ENCODE measurements at regions of chr3 and their contacts with region 1.

Region 1: DNA sequence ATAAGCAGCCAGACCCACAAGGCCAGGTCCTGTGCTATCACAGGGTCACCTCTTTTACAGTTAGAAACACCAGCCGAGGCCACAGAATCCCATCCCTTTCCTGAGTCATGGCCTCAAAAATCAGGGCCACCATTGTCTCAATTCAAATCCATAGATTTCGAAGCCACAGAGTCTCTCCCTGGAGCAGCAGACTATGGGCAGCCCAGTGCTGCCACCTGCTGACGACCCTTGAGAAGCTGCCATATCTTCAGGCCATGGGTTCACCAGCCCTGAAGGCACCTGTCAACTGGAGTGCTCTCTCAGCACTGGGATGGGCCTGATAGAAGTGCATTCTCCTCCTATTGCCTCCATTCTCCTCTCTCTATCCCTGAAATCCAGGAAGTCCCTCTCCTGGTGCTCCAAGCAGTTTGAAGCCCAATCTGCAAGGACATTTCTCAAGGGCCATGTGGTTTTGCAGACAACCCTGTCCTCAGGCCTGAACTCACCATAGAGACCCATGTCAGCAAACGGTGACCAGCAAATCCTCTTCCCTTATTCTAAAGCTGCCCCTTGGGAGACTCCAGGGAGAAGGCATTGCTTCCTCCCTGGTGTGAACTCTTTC is 39.6 kb downstream of the TGM4 start:
- DNase-seq: peak; percentile 68
- H3K4me3 ChIP-seq: no peak overlapping the region
- H3K27ac ChIP-seq: no peak overlapping the region
- H3K4me1 ChIP-seq: no peaks in the 10 kb centered on the region
- H3K27me3 ChIP-seq: no peaks in the 10 kb centered on the region
- CTCF ChIP-seq: peak; percentile 84 to 91

Region 2: GRCh38 chr3:44323341-44323955 is 590.5 kb before region 1 on chr3:
- CTCF ChIA-PET with region 1: no interaction called
- dilution Hi-C with region 1: no loop called
- in situ Hi-C with region 1: no loop called
- intact Hi-C with region 1: loop called (anchors 1 kb)
- DNase-seq: peak; percentile 42
- H3K4me3 ChIP-seq: no peak overlapping the region
- H3K27ac ChIP-seq: no peak overlapping the region
- H3K4me1 ChIP-seq: no peaks in the 10 kb centered on the region
- H3K27me3 ChIP-seq: no peaks in the 10 kb centered on the region
- CTCF ChIP-seq: peak; percentile 88 to 91

Region 3: GRCh38 chr3:44529927-44530326 is 384.0 kb before region 1 on chr3:
- CTCF ChIA-PET with region 1: no interaction called
- dilution Hi-C with region 1: no loop called
- in situ Hi-C with region 1: loop called in 1 of 2 experiments (anchors 10 kb)
- intact Hi-C with region 1: loop called (anchors 1 kb)
- DNase-seq: no peak
- H3K4me3 ChIP-seq: no peak overlapping the region
- H3K27ac ChIP-seq: no peak overlapping the region
- H3K4me1 ChIP-seq: no peaks in the 10 kb centered on the region
- H3K27me3 ChIP-seq: no peaks in the 10 kb centered on the region
- CTCF ChIP-seq: peak; percentile 33 to 36

Region 4: DNA sequence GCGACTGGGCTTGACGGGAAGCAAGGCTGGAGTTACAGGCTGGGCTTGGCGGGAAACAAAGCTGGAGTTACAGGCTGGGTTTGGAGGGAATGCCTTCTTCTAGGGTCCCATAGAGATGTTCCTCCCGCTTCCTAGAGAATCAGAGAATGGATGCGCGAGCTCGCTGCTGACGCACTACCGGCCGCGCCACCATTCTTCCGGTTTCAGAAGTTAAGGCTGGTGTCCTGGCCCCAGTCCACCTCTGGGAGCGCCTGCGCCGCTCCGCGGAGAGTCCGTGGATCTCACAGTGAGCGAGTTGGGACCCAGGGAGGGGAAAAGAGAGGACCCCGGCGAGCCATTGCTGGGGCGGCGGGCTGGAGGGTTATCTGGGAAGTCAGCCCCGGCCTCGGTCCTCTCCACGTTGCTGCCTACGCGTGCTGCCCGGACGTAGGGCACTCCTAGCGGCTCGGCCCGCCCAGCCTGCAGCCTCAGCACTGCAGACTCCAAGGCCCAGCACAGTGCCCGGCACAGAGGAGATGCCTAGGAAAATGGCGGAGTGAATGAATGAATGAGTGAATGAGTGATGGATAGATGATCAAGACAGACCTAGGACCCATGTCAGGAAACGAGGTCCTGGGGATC is 201.4 kb before region 1 on chr3 and contains the start of gene ZNF502:
- CTCF ChIA-PET with region 1: no interaction called
- dilution Hi-C with region 1: no loop called
- in situ Hi-C with region 1: no loop called
- intact Hi-C with region 1: loop called (anchors 1 kb)
- DNase-seq: peak; percentile 80
- H3K4me3 ChIP-seq: peak within 1 kb of the TSS; percentile 72 to 88 (median 81)
- H3K27ac ChIP-seq: peak within 1 kb of the TSS; percentile 4
- H3K4me1 ChIP-seq: no peaks in the 10 kb centered on the region
- H3K27me3 ChIP-seq: no peaks in the 10 kb centered on the region
- CTCF ChIP-seq: peak; percentile 19 to 50
- total RNA-seq, gene ZNF502: 6.0 to 6.1 TPM

Region 5: GRCh38 chr3:44845528-44846520 is 68.1 kb before region 1 on chr3:
- CTCF ChIA-PET with region 1: no interaction called
- dilution Hi-C with region 1: no loop called
- in situ Hi-C with region 1: no loop called
- intact Hi-C with region 1: loop called (anchors 5 kb)
- DNase-seq: peak; percentile 46
- H3K4me3 ChIP-seq: no peak overlapping the region
- H3K27ac ChIP-seq: no peak overlapping the region
- H3K4me1 ChIP-seq: no peaks in the 10 kb centered on the region
- H3K27me3 ChIP-seq: no peaks in the 10 kb centered on the region
- CTCF ChIP-seq: no peak

Region 6: DNA sequence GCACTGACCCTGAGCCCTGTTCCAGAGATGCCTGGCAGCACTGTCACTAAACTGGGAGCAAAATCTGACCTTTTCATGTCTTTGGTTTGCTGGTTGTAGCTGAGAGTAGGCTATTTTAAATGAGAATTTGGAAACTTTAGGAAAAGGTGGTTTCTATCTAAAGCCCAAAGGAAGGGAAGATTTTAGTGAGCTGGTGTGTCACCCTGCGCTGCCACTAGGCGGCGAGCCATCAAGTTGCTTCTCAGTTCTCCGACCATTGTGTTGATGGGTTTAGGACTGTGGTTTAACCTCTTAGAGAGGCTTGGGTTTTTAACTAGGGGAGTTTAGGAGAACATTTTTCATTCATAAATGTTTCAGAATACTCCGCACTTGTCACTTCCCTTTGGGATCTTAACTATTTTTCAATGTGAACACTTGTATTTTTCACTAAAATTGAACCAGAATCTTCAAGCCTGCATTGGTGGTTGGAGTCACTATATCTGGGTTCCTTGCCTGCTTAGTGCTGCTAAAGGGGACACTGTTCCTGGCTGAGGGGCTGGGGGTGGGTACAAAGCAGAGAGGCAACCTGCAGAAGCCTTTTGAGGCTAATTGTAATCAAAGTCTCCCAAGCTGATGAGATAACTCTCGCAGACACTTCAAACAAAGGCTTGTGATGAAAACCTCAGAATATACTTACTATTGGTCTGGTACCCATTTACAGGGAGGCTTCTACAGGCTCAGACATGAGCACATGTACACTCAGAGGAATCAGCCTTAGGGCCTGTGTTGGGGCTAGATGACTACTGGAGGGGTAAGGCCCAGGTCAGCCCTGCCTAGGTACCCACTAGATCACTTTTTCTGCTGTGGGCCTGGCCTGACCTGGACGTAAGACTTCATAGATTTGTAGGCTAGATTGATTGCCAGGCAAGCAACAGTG is 78.8 kb after region 1 on chr3:
- CTCF ChIA-PET with region 1: no interaction called
- dilution Hi-C with region 1: no loop called
- in situ Hi-C with region 1: no loop called
- intact Hi-C with region 1: loop called (anchors 5 kb)
- DNase-seq: peak; percentile 96
- H3K4me3 ChIP-seq: no peak overlapping the region
- H3K27ac ChIP-seq: peak overlapping the region; percentile 92
- H3K4me1 ChIP-seq: peaks cover 54% of the 10 kb centered on the region
- H3K27me3 ChIP-seq: no peaks in the 10 kb centered on the region
- CTCF ChIP-seq: peak; percentile 79 to 93

Region 7: GRCh38 chr3:45026038-45026437 is 112.1 kb after region 1 on chr3 and contains the start of gene CLEC3B:
- CTCF ChIA-PET with region 1: no interaction called
- dilution Hi-C with region 1: no loop called
- in situ Hi-C with region 1: no loop called
- intact Hi-C with region 1: loop called (anchors 5 kb)
- DNase-seq: no peak
- H3K4me3 ChIP-seq: no peak within 1 kb of the TSS
- H3K27ac ChIP-seq: no peak within 1 kb of the TSS
- H3K4me1 ChIP-seq: peaks cover 15% of the 10 kb centered on the region
- H3K27me3 ChIP-seq: no peaks in the 10 kb centered on the region
- CTCF ChIP-seq: no peak
- total RNA-seq, gene CLEC3B: 0.33 TPM in 1 of 2 donors, not detected in the other

Region 8: GRCh38 chr3:45055411-45056143 is 141.6 kb after region 1 on chr3:
- CTCF ChIA-PET with region 1: no interaction called
- dilution Hi-C with region 1: no loop called
- in situ Hi-C with region 1: no loop called
- intact Hi-C with region 1: no loop called
- DNase-seq: no peak
- H3K4me3 ChIP-seq: no peak overlapping the region
- H3K27ac ChIP-seq: peak overlapping the region; percentile 15
- H3K4me1 ChIP-seq: peaks cover 29% of the 10 kb centered on the region
- H3K27me3 ChIP-seq: no peaks in the 10 kb centered on the region
- CTCF ChIP-seq: peak; percentile 14 to 31

Region 9: DNA sequence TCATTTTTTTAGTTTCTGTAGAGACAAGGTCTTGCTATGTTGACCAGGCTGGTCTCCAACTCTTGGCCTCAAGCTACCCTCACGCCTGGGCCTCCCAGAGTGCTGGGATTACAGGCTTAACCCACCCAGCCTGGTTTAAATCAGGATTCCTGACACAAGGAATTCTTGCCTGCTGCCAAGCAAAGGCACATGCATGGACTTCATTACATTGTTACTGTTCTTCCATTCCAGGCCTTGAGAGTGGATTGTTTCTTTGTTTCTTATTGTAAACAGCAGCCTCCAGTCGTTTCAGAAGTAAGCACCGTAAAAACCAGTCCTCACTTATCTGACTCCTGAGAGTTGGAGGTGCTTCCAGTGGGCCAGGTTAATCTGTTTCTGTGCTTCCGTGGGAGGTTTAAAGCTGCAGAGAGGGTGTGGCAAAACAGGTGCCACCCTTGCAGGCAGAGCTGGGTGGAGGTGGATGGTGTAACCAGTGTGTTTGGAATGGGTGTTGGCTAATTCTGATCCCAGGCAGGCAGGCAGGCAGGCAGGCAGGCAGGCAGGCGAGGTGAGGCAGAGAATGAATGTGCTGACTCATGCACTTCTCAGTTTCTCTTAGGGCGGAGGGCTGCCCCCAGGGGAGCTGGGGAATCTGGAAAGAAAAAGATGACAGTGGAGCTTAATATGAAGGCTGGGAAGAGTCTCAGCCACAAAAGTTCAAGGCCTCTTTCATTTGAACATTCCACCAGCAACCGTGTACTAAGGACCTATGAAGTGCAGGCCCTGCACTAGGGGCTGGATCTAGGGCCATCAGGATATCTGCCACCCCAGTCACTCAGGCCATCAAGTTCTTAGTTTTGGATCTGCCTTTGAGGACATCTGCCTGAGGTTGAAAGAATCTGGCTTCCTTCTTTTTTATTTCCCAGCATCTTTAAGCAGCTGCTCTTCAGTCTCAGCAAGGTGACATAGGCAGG is 269.2 kb after region 1 on chr3:
- CTCF ChIA-PET with region 1: no interaction called
- dilution Hi-C with region 1: no loop called
- in situ Hi-C with region 1: no loop called
- intact Hi-C with region 1: no loop called
- DNase-seq: peak; percentile 95
- H3K4me3 ChIP-seq: no peak overlapping the region
- H3K27ac ChIP-seq: peak overlapping the region; percentile 61
- H3K4me1 ChIP-seq: peaks cover 40% of the 10 kb centered on the region
- H3K27me3 ChIP-seq: no peaks in the 10 kb centered on the region
- CTCF ChIP-seq: no peak

Region 10: DNA sequence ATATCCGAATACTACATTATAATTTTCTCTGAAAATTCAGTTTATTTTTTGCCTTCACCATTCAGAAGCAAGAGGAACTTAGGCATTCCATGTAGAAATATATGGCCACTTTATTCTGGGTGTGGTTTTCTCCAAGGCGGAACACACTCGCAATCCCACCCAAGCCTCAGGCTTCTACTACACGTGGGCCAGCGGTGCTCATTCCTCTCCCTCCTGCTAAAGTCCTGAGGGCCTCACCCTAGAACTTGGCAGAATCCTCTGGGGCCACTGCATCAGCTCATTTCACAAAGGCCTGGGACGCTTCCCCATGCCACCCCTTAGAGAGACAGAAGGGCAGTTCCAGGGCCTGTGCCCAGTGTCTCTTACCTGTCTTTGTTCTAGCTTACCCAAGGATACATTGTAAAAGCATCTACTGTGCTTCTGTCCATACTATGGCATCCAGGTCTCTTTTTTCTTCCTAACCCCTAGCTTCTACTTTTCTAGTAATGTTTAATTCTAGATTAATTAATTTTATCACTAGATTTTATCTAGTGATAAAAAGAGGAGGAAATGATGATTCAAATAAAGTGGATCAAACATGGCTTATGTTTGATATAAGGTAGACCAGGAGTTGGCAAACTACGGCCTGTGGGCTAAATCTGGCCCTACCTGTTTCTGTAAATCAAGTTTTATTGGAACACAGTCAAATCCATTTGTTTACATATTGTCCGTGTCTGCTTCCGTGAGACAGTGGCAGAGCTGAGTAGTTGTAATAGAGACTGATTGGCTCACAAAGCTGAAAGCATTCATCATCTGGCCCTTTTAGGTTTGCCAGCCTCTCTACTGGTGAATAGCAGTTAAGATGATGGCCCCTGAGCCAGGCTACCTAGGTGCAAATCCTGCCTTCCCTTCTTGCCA is 504.2 kb after region 1 on chr3:
- CTCF ChIA-PET with region 1: no interaction called
- dilution Hi-C with region 1: no loop called
- in situ Hi-C with region 1: no loop called
- intact Hi-C with region 1: no loop called
- DNase-seq: peak; percentile 21
- H3K4me3 ChIP-seq: no peak overlapping the region
- H3K27ac ChIP-seq: no peak overlapping the region
- H3K4me1 ChIP-seq: no peaks in the 10 kb centered on the region
- H3K27me3 ChIP-seq: no peaks in the 10 kb centered on the region
- CTCF ChIP-seq: no peak

Measured in mammary epithelial cell (primary cell).